ENCODE measurements at regions of chr11 and their contacts with region 1.

Region 1: GRCh38 chr11:13993096-13993765 is 30.7 kb downstream of the SPON1 start:
- DNase-seq: no peak
- H3K4me3 Mint-ChIP-seq: no peak overlapping the region
- H3K27ac Mint-ChIP-seq: peak overlapping the region; percentile 1
- H3K4me1 Mint-ChIP-seq: peaks cover 17% of the 10 kb centered on the region
- H3K27me3 Mint-ChIP-seq: peaks cover 22% of the 10 kb centered on the region
- CTCF ChIP-seq: no peak

Region 2: DNA sequence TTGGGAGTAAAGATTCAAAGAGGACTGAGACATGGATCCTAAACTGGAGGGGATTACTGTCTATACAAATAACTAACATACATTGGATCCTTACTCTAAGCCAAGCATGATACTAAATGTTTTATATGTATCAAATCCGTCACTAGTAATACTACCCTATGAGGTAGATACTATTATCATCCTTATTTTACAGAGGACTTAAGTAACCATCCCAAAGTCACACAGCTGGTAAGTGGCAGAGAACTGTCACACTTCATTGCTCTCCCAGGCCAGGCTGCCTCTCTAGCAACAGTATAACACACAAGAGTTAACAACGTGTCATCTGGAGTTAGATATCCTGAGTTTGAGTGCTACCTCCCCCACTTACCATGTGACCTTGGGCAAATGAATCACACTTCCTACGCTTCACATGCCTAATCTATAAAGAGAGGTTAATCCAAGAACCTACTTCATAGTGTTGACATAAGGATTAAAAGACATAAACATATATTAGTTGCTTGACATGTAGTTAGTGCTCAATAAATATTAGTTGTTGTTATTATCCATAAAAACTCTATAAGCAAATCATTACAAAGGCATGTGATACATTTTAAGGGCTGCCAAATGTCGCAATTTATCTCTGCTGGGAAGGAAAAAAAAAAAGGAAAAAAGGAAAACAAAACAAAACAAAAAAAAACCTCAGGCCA is 64.5 kb before region 1 on chr11:
- CTCF ChIA-PET with region 1: no interaction called
- intact Hi-C with region 1: no loop called
- DNase-seq: no peak
- H3K4me3 Mint-ChIP-seq: no peak overlapping the region
- H3K27ac Mint-ChIP-seq: no peak overlapping the region
- H3K4me1 Mint-ChIP-seq: peaks cover 16% of the 10 kb centered on the region
- H3K27me3 Mint-ChIP-seq: no peaks in the 10 kb centered on the region
- CTCF ChIP-seq: no peak

Region 3: DNA sequence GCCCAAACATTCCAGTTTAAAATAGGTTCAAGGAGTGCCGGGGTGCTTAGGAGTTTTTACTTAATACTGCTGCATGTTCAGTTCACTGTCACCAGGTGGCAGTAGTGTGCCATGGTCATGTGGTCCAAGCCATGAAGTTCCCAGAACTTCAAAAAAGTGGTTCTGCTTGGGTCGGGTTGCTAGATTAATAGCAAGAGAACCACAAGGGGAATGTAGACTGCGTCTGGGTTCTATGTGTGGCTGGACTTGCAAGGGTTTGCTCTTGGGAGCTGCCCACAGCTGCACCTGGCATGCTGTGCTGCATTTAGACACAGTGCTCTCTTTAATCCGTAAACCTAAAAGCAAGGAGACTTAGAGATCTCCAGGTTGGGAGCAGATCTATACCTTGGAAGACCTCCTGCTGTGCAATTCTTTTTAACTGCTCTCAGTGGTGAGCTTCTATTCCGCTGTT is 37.2 kb before region 1 on chr11:
- CTCF ChIA-PET with region 1: no interaction called
- intact Hi-C with region 1: no loop called
- DNase-seq: peak; percentile 43
- H3K4me3 Mint-ChIP-seq: no peak overlapping the region
- H3K27ac Mint-ChIP-seq: no peak overlapping the region
- H3K4me1 Mint-ChIP-seq: no peaks in the 10 kb centered on the region
- H3K27me3 Mint-ChIP-seq: no peaks in the 10 kb centered on the region
- CTCF ChIP-seq: peak; percentile 73

Region 4: DNA sequence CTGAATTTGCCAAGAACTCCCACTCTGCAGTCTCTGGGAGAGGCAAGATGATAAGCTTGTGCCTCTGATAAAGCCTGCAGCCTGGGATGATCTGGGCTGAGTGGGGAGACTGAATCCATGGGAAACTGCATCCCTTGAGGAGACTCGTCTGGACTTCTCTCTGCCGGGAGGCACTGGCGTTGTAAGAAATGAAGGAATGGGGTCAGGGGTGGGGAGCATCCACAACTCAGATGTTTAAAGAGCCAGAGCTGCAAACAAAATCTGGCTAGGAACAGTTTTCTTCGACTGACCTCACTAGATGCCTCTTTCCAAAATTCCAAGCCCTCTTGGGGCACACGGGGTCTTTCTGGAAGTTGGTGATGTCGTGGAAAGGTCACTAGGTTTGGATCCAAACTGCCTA is 33.7 kb after region 1 on chr11:
- CTCF ChIA-PET with region 1: no interaction called
- intact Hi-C with region 1: no loop called
- DNase-seq: no peak
- H3K4me3 Mint-ChIP-seq: no peak overlapping the region
- H3K27ac Mint-ChIP-seq: no peak overlapping the region
- H3K4me1 Mint-ChIP-seq: peaks cover 36% of the 10 kb centered on the region
- H3K27me3 Mint-ChIP-seq: peaks cover 11% of the 10 kb centered on the region
- CTCF ChIP-seq: no peak

Region 5: DNA sequence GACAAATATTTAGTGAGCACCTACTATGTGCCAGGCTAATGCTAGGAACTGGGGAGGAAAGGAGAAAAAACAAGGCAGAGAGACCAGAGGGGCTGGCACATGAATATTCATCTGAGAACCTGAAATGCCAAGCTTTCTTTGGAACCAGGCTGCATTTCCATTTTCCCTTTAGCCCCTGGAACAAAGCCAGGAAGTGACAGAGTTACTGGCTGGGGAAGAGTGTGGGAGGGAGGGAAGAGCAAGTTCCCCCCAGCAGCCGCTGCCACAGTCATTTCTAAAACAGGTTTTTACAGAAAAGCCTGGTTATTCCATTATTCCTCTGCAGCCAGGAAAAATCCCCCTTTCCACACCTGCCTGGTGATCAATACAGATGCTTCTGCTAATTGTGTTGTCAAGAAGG is 66.3 kb after region 1 on chr11:
- CTCF ChIA-PET with region 1: no interaction called
- intact Hi-C with region 1: no loop called
- DNase-seq: no peak
- H3K4me3 Mint-ChIP-seq: no peak overlapping the region
- H3K27ac Mint-ChIP-seq: no peak overlapping the region
- H3K4me1 Mint-ChIP-seq: no peaks in the 10 kb centered on the region
- H3K27me3 Mint-ChIP-seq: peaks cover 55% of the 10 kb centered on the region
- CTCF ChIP-seq: no peak

Region 6: DNA sequence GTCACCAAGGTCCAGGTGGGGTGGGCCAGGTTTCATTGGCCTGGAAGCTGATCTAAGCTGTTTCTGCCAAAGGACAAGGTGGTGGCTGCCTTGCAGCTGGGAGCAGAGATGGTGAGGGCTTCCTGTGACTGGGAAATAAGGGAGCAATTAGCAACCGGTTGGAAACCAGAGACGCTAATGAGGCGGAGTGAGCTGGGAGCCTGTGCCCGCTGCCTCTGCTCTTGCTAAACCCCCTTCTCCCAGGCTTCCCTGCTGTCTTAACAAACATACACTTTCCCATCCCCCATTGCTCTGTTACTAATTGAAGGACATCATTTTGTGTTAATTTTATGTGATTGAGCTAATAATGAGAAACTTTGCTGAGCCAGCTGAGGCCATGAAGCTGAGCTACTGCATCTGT is 1243.3 kb after region 1 on chr11:
- CTCF ChIA-PET with region 1: interaction called, 16 read pairs
- intact Hi-C with region 1: no loop called
- DNase-seq: no peak
- H3K4me3 Mint-ChIP-seq: no peak overlapping the region
- H3K27ac Mint-ChIP-seq: no peak overlapping the region
- H3K4me1 Mint-ChIP-seq: no peaks in the 10 kb centered on the region
- H3K27me3 Mint-ChIP-seq: peaks cover 13% of the 10 kb centered on the region
- CTCF ChIP-seq: no peak